ENCODE measurements at regions of chr5 and their contacts with region 1.

Region 1: DNA sequence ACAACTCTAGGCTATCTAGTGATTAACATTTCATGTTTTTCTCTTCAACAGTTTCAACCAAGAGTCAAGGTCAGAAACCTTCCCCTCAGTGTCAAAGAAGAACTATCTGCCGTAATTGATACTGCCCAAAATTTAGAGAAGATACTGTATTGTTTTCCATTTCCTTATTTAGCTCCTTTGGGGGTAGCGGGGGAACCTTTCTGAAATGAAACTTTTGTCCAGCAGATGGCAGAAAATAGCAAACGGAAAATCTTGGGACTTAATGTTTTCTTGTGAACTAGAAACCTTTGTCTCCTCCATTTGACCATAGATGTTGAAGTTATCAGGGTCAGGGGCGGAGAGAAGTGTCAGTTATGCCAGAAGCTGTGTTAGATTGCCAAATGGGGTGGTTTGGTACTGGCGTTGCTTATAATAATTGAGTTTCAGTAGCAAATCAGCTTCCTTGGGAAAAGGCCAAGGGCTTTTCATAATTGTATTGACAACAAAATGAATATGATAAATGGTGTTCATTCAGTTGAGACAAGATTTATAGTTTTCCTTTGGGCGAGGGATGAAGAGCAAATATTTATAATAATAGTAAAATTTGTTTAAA is 101.7 kb upstream of the TLX3 start:
- DNase-seq: no peak
- ATAC-seq: no peak
- H3K4me3 Mint-ChIP-seq: no peak overlapping the region
- H3K27ac Mint-ChIP-seq: no peak overlapping the region
- H3K4me1 Mint-ChIP-seq: no peaks in the 10 kb centered on the region
- H3K27me3 Mint-ChIP-seq: peaks cover 9% of the 10 kb centered on the region
- CTCF ChIP-seq: no peak

Region 2: GRCh38 chr5:170747851-170748250 is 459.5 kb before region 1 on chr5:
- CTCF ChIA-PET with region 1: no interaction called
- POLR2A ChIA-PET with region 1: no interaction called
- intact Hi-C with region 1: no loop called
- DNase-seq: no peak
- ATAC-seq: no peak
- H3K4me3 Mint-ChIP-seq: no peak overlapping the region
- H3K27ac Mint-ChIP-seq: no peak overlapping the region
- H3K4me1 Mint-ChIP-seq: peaks cover 3% of the 10 kb centered on the region
- H3K27me3 Mint-ChIP-seq: peaks cover 30% of the 10 kb centered on the region
- CTCF ChIP-seq: no peak

Region 3: DNA sequence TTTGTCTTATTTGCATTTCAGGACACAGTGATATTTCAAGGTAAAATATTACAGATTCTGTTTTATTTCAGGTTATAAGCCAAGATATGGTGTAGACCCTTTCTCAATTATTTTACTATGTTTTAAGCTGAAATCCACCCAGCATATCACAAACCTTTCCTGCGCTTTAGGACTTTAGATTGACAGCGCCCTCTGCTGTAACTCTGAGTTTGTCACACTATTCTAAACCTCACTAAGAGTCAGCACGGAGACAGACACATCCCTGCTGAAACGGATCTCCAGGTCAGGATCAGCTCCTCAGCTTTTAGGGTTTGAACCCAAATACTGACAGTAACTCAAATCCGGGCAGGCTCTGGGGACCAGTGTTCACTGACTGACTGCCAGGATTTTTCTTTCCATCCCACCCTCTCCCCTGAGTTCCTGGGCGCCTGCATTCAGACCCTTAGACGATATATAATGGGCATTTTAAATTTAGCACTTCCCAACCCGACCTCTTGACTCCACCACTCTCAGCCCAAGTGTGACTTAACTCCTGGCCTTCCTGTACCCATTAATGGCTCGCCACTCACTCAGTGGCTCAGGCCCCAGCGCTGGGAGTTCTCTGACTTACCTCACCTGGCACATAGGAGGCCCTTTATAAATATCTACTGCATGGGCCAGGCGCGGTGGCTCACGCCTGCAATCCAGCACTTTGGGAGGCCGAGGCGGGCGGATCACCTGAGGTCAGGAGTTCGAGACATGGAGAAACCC is 135.2 kb after region 1 on chr5:
- CTCF ChIA-PET with region 1: no interaction called
- POLR2A ChIA-PET with region 1: no interaction called
- intact Hi-C with region 1: loop called (anchors 1 kb)
- DNase-seq: no peak
- ATAC-seq: no peak
- H3K4me3 Mint-ChIP-seq: no peak overlapping the region
- H3K27ac Mint-ChIP-seq: no peak overlapping the region
- H3K4me1 Mint-ChIP-seq: no peaks in the 10 kb centered on the region
- H3K27me3 Mint-ChIP-seq: peaks cover 13% of the 10 kb centered on the region
- CTCF ChIP-seq: no peak

Region 4: GRCh38 chr5:172035039-172035438 is 827.7 kb after region 1 on chr5:
- CTCF ChIA-PET with region 1: no interaction called
- POLR2A ChIA-PET with region 1: no interaction called
- intact Hi-C with region 1: loop called (anchors 10 kb)
- DNase-seq: no peak
- ATAC-seq: peak; percentile 62
- H3K4me3 Mint-ChIP-seq: no peak overlapping the region
- H3K27ac Mint-ChIP-seq: peak overlapping the region; percentile 18
- H3K4me1 Mint-ChIP-seq: peaks cover 16% of the 10 kb centered on the region
- H3K27me3 Mint-ChIP-seq: no peaks in the 10 kb centered on the region
- CTCF ChIP-seq: no peak